Right cardiac atrium (tissue), 5 donors: ENCODE measurements at regions of chr12 and their contacts with region 1.

Region 1: DNA sequence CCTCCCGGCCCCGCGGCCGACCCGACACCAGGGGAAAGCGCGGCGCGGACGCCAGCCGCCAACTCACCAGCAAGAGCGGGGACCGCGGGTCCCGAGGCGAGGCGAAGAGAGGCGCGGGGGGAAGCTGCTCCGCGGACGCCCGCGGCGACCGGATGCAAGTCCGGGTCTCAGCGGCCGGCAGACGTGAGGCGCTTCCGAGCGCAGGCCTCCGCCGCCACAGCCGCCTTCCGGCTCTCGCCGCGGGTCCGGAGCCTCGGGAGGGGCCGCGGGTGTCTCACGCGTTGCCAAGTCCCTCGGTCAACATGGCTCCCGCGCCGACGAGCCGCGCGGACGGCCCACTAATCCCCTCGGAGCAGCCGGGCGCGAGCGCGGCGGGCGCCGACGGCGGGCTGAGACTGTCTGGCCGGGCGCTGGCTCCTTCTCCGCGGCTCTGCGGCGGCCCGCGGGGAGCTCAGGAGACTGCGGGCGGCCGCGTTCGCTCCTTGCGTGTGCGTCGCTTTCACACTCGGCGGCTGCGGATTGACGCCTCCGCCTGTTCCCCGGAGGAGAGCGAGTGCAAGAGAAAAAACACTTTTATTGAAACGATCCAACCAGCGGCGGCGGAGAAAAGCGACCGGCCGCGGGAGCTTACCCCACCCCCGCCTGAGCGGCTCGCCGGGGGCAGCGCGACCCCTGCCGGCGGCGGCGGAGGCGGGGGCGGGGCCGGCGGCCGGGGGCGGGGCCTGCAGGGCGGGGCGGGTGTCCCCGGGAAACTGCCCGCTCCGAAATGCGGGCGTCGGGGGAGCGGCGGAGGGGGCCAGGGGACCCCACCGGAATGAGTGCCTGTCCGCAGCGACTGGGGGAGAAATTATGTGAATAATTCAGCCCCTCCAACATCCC is at the start of gene CDK17:
- DNase-seq: peak; percentile 86 to 94 (median 92)
- ATAC-seq: peak; percentile 85 to 93
- H3K4me3 ChIP-seq: peak within 1 kb of the TSS; percentile 97
- H3K27ac ChIP-seq: peak within 1 kb of the TSS; percentile 97
- H3K4me1 ChIP-seq: no peaks in the 10 kb centered on the region
- H3K27me3 ChIP-seq: no peaks in the 10 kb centered on the region
- total RNA-seq, gene CDK17: 18.4 to 30.4 (median 23.1) TPM

Region 2: GRCh38 chr12:95922231-95922630 is 477.9 kb before region 1 on chr12:
- intact Hi-C with region 1: no loop called
- DNase-seq: no peak
- ATAC-seq: no peak
- H3K4me3 ChIP-seq: no peak overlapping the region
- H3K27ac ChIP-seq: no peak overlapping the region
- H3K4me1 ChIP-seq: no peaks in the 10 kb centered on the region
- H3K27me3 ChIP-seq: no peaks in the 10 kb centered on the region

Region 3: GRCh38 chr12:96047229-96048211 is 352.6 kb before region 1 on chr12:
- intact Hi-C with region 1: loop called in 1 of 4 experiments (anchors 10 kb)
- DNase-seq: peak in 1 of 3 donors; percentile 50
- ATAC-seq: peak; percentile 62 to 63
- H3K4me3 ChIP-seq: no peak overlapping the region
- H3K27ac ChIP-seq: no peak overlapping the region
- H3K4me1 ChIP-seq: peaks cover 2% of the 10 kb centered on the region
- H3K27me3 ChIP-seq: no peaks in the 10 kb centered on the region

Region 4: DNA sequence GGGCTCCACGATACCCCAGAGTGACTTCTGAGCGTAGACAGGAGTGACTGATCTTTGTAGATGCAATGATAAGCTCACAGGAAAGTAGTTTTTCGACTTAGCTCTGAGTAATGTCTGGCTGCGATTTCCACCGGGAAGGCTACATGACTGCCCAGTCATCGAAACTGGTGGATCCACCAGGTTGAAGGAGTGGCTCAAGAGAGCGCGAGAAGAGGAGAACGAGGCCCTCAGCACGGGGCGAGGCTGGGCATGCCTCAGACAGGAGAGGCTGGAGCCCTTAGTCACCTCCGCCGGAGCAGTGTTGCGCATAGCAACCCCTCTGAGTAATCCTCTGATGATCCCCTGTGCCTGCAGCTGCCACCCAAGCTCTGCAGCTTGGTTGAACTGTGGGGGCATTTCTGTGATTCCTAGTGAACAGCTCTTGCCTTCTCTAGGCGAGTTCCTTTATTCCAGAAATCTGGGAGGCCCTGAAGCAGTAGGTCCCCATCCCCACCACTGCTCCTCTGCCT is 180.4 kb before region 1 on chr12:
- intact Hi-C with region 1: loop called in 1 of 4 experiments (anchors 10 kb)
- DNase-seq: no peak
- ATAC-seq: peak in 1 of 2 donors; percentile 65
- H3K4me3 ChIP-seq: no peak overlapping the region
- H3K27ac ChIP-seq: peak overlapping the region; percentile 9
- H3K4me1 ChIP-seq: peaks cover 2% of the 10 kb centered on the region
- H3K27me3 ChIP-seq: no peaks in the 10 kb centered on the region

Region 5: DNA sequence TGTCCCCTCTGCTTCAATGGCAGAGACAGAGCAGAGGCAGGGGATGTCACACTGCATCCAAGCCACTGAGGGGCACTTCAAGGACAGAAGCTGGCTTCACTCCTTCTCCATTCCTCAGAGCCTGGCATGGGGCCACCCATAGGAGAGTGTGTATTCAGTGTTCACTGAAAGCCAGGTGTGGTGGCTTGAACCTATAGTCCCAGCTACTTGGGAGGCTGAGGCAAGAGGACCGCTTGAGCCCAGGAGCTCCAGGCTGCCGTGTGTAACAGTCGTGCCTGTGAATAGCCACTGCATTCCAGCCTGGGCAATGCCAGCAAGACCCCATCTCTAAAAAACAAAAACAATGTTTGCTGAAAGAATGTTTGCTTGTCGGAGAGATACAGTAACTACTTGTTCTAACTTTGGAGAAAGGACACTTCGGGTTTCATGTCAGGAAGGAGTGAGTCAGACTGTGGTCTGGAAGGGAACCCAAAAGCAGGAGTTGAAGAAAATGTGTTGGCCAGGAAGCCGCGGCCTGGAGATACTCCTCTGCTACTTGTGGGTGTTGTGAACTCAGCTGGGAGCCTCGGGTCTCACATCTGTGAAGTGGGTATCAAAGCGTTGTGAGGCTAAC is 162.6 kb before region 1 on chr12:
- intact Hi-C with region 1: loop called in 1 of 4 experiments (anchors 10 kb)
- DNase-seq: peak; percentile 75 to 84 (median 76)
- ATAC-seq: peak; percentile 12 to 40
- H3K4me3 ChIP-seq: no peak overlapping the region
- H3K27ac ChIP-seq: peak overlapping the region; percentile 90
- H3K4me1 ChIP-seq: peaks cover 51% of the 10 kb centered on the region
- H3K27me3 ChIP-seq: no peaks in the 10 kb centered on the region

Region 6: DNA sequence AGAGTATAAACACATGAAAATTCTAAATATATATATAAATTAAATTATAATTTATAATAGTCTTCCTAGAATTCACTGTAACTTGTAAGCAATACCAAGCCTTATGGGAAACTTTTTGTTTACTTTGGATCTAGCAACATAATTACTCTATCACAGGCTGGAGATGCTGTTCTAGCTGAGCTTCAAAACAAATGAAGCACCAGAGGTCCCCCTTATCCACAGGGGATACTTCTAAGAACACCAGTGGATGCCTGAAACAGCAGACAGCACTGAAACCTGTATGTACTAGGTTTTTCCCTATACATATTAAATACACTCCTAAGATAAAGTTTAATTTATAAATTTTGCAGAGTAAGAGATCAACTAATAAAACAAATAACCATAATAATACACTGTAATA is 96.5 kb before region 1 on chr12:
- intact Hi-C with region 1: loop called in 2 of 4 experiments (anchors 5 to 10 kb)
- DNase-seq: no peak
- ATAC-seq: no peak
- H3K4me3 ChIP-seq: no peak overlapping the region
- H3K27ac ChIP-seq: no peak overlapping the region
- H3K4me1 ChIP-seq: no peaks in the 10 kb centered on the region
- H3K27me3 ChIP-seq: no peaks in the 10 kb centered on the region

Region 7: GRCh38 chr12:96308881-96309280 is 91.3 kb before region 1 on chr12:
- intact Hi-C with region 1: loop called in 2 of 4 experiments (anchors 5 to 10 kb)
- DNase-seq: no peak
- ATAC-seq: no peak
- H3K4me3 ChIP-seq: no peak overlapping the region
- H3K27ac ChIP-seq: no peak overlapping the region
- H3K4me1 ChIP-seq: no peaks in the 10 kb centered on the region
- H3K27me3 ChIP-seq: no peaks in the 10 kb centered on the region

Region 8: DNA sequence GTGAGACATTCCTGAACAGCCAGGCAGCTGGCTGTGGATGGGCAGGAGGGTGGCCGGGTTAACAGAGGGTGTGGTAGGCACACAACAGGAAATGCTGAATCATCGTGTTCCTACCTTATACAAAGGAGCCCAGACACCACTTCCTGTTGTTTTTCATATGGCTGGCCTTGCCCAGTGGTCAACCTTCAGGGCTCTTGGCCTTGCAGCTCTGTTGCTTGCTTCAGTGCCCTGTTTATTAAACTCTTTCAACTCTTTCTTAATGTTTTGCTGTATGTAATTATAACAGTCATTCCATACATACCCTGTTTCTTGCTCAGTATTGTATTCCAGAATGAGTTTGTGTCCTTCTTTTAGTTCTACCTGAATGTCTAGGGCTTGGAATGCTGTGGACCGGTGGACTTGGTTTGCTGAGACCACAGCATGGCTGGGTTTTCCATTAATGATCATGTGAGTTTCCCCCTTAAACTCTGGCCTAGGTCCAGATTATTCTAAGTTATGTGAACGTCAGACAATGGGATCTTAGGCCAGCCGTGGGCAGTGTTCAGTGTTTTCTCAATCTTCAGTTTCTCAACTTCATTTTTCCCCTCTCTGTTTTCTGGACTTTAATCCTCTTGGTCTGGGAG is 101.1 kb after region 1 on chr12:
- intact Hi-C with region 1: loop called in 1 of 4 experiments (anchors 10 kb)
- DNase-seq: peak; percentile 39 to 65 (median 45)
- ATAC-seq: peak; percentile 90 to 98
- H3K4me3 ChIP-seq: no peak overlapping the region
- H3K27ac ChIP-seq: peak overlapping the region; percentile 91
- H3K4me1 ChIP-seq: peaks cover 2% of the 10 kb centered on the region
- H3K27me3 ChIP-seq: no peaks in the 10 kb centered on the region